Activated T-helper 1 cell treated with anti-CD3 and anti-CD28 coated beads, Interleukin-12 subunit alpha, Interleukin-12 subunit beta, Interleukin-2, Interleukin-4 antibody, amounts not matched to agents 30 ng/mL and 10 ng/mL and 1 ng/mL, durations not matched to agents 14 hours and 24 hours and 36 hours (primary cell): ENCODE measurements at regions of chr9 and their contacts with region 1.

Region 1: GRCh38 chr9:27033823-27034403 is 28.4 kb upstream of the LRRC19 start:
- DNase-seq: peak; percentile 9
- H3K4me3 Mint-ChIP-seq: no peak overlapping the region
- H3K27ac Mint-ChIP-seq: no peak overlapping the region
- H3K4me1 Mint-ChIP-seq: no peaks in the 10 kb centered on the region
- H3K27me3 Mint-ChIP-seq: no peaks in the 10 kb centered on the region

Region 2: DNA sequence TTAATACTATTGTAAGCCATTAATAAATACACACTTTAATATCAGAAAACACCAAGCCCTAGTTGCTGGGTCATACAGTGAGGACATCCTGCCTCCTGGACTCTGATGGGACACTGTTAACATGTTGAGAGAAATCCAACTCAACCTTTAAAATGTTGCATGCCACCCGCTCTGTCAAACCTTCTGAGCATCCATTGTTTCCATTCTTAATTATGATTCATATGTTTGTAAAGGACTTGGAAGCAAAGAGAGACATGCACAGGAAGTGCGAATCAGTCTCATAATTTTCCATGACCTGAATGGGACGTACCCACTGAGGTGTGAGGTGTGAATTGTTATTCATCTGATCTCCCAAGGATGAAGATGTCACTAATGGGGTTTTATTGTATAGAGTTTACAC is 327.7 kb before region 1 on chr9:
- intact Hi-C with region 1: no loop called
- DNase-seq: no peak
- H3K4me3 Mint-ChIP-seq: no peak overlapping the region
- H3K27ac Mint-ChIP-seq: no peak overlapping the region
- H3K4me1 Mint-ChIP-seq: no peaks in the 10 kb centered on the region
- H3K27me3 Mint-ChIP-seq: no peaks in the 10 kb centered on the region

Region 3: GRCh38 chr9:27276193-27277030 is 242.5 kb after region 1 on chr9:
- intact Hi-C with region 1: loop called (anchors 1 kb)
- DNase-seq: no peak
- H3K4me3 Mint-ChIP-seq: no peak overlapping the region
- H3K27ac Mint-ChIP-seq: no peak overlapping the region
- H3K4me1 Mint-ChIP-seq: peaks cover 8% of the 10 kb centered on the region
- H3K27me3 Mint-ChIP-seq: peaks cover 11% of the 10 kb centered on the region

Region 4: GRCh38 chr9:27394154-27394825 is 360.4 kb after region 1 on chr9:
- intact Hi-C with region 1: no loop called
- DNase-seq: no peak
- H3K4me3 Mint-ChIP-seq: no peak overlapping the region
- H3K27ac Mint-ChIP-seq: no peak overlapping the region
- H3K4me1 Mint-ChIP-seq: no peaks in the 10 kb centered on the region
- H3K27me3 Mint-ChIP-seq: peaks cover 9% of the 10 kb centered on the region

Region 5: GRCh38 chr9:27548055-27548741 is 514.3 kb after region 1 on chr9:
- intact Hi-C with region 1: loop called (anchors 5 kb)
- DNase-seq: no peak
- H3K4me3 Mint-ChIP-seq: no peak overlapping the region
- H3K27ac Mint-ChIP-seq: no peak overlapping the region
- H3K4me1 Mint-ChIP-seq: no peaks in the 10 kb centered on the region
- H3K27me3 Mint-ChIP-seq: no peaks in the 10 kb centered on the region